ENCODE measurements at regions of chr4 and their contacts with region 1.

Region 1: GRCh38 chr4:170138580-170139194 is 48.9 kb upstream of the AADAT start:
- DNase-seq: peak; percentile 30
- H3K4me3 Mint-ChIP-seq: no peak overlapping the region
- H3K27ac Mint-ChIP-seq: no peak overlapping the region
- H3K4me1 Mint-ChIP-seq: no peaks in the 10 kb centered on the region
- H3K27me3 Mint-ChIP-seq: no peaks in the 10 kb centered on the region

Region 2: DNA sequence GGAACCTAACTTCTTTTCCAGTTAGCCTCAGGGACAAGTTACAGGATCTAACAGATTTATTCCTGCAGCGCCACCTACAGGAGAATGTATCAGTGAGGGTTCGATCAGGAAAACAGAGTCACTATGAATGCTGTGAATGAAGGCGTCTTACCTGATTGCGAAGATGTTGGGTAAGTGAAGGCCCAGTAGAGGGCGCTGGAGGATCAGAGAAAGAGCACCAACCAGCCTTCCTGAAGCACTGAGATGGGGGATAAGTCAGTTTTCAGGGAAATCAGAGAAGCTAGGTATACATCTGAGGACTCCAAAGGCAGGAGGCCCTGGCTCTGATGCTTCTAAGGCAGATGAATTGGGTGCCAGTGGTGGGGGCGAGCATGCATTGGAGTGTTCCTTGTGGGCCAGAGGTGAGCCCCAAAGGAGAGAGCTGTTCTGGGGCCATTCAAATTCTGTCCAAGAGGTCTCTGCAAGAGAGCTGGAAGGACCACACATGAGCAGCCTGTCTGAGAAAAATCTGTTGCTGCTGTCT is 121.0 kb after region 1 on chr4:
- intact Hi-C with region 1: loop called (anchors 2 kb)
- DNase-seq: peak; percentile 40
- H3K4me3 Mint-ChIP-seq: no peak overlapping the region
- H3K27ac Mint-ChIP-seq: no peak overlapping the region
- H3K4me1 Mint-ChIP-seq: no peaks in the 10 kb centered on the region
- H3K27me3 Mint-ChIP-seq: no peaks in the 10 kb centered on the region

Region 3: DNA sequence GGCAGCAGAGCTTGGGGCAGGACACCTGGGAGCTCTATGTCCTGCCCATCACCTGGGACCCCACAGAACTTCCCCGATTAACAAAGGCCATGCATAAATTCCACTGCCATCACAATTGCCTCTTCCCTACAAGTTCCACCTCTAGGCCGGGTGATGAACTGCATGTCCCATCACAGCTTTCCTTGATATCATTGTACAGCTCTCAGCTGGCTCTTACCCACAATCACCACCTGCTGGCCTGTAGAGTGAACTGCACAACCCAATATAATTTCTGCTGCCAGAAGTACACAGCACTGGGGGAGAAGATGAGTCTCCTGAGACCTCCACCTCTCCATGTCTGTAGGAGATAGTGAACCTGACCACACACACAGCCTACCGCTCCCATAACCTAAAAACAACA is 236.1 kb after region 1 on chr4:
- intact Hi-C with region 1: loop called (anchors 10 kb)
- DNase-seq: no peak
- H3K4me3 Mint-ChIP-seq: no peak overlapping the region
- H3K27ac Mint-ChIP-seq: no peak overlapping the region
- H3K4me1 Mint-ChIP-seq: no peaks in the 10 kb centered on the region
- H3K27me3 Mint-ChIP-seq: no peaks in the 10 kb centered on the region

Region 4: GRCh38 chr4:170853422-170854021 is 714.8 kb after region 1 on chr4:
- intact Hi-C with region 1: loop called (anchors 2 kb)
- DNase-seq: no peak
- H3K4me3 Mint-ChIP-seq: no peak overlapping the region
- H3K27ac Mint-ChIP-seq: no peak overlapping the region
- H3K4me1 Mint-ChIP-seq: peaks cover 3% of the 10 kb centered on the region
- H3K27me3 Mint-ChIP-seq: no peaks in the 10 kb centered on the region